ENCODE measurements at regions of chr6 and their contacts with region 1.

Region 1: DNA sequence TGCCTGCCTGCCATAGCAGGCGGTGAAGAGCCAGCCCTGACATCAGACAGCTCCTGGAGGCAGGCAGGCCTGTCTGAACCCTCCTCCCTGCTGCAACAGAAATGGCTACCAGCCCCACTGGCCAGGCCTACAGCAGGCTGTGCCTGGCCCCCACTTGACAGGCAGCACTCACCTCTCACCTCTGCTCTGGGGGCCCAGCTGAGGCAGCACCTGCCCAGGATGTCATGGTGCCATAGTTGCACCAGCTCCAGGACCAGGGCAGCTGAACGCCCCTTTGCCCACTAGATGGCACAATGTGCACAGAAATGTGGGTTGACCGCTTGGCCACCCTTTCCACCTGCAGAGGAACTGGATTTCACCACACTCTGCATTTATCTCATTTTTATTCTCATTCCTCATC is 30.6 kb downstream of the MRPL14 start:
- DNase-seq: peak; percentile 81
- ATAC-seq: peak; percentile 88

Region 2: DNA sequence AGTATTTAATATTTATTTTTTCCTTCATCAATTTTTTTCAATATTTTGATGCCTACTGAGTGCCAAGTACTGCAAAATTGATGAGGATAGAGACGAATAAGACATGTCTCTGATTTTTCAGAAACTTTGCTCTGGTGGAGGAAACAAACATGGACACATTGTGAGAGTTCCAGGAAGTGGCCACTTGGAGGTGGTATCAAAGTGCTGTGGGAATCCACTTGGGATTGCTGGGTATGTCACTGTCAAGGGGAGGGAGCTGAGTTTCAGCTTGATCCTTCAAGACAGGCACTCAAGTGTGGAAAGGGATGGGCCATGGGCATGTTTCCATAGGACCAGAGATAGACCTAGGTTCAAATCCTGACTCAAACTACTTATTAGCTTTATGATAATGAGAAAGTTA is 693.8 kb before region 1 on chr6:
- intact Hi-C with region 1: no loop called
- DNase-seq: no peak
- ATAC-seq: no peak

Region 3: GRCh38 chr6:44138717-44139350 is 42.2 kb after region 1 on chr6:
- intact Hi-C with region 1: no loop called
- DNase-seq: no peak
- ATAC-seq: no peak

Region 4: DNA sequence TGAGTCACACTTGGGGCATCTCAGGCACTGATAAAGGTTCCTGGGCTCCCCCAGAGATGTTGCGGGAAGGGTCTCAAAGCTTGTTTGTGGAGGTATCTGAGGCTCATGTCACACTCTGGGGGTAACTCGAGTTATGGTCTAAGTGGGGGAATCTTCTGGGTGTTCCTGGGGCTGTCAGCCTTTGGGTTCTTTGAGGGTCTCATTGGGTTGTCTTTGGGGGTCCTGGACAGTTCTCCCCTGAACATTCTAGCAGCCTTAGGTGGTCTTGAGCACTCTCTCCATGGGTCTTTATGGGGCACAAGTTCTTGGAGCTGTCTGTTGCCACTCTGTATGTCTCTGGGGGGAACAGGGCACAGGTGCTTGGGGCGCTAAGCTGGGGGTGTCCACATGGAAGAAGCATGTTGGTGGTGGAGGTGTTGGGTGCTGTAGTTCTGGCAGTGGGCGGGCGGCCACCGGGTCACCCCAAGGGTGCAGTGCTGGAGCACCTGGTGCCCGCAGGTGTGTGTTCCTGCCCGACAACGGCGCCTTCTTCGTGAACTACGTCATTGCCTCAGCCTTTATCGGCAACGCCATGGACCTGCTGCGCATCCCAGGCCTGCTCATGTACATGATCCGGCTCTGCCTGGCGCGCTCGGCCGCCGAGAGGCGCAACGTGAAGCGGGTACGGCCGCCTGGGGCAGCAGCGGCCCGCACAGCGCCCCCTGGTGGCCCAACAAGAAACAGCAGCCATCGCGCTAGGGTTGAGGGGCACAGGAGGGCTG is 54.9 kb after region 1 on chr6:
- intact Hi-C with region 1: loop called (anchors 2 kb)
- DNase-seq: peak; percentile 86
- ATAC-seq: peak; percentile 86

Region 5: DNA sequence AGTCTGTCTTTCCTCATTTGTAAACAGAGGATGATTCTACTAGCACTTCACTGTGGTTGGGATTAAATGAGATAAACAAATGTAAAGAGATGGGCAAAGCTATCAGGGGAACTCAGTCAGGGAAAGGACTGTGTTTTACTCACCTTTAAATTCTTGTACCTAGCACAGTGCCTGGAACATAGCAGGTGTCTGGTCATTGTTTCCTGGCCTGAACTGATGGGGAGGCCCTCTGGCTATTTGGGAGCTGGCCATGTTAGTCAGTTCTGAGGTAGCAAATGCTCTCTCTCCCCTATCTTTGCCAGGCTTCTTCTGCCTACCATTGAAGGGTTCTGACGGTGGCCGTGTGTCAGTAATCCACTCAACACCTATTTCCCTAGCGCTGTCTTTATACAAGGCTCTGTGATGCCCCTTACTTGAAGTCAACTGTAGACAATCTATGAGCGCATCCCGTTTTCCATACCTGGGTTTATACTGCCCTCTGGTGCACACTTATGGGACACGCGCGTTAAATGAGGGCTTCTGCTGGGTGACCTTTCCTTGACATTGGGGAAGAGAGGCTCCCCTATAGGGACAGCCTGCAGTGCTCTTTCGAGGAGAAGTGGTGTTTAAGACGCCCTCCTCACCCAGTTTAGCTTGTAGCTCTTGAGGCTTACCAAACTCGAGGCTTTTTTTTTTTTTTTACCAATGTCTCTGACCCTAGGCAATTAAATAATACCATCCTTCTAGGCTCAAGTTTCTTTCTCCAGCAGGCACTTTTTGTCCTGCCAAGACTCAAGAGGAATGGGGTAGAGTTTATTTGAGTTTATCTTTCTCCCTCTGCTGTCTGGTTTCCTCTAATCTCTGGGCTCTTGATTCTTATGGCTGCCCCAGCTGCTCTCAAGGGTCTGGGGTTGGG is 241.9 kb after region 1 on chr6:
- intact Hi-C with region 1: loop called (anchors 2 kb)
- DNase-seq: peak; percentile 55
- ATAC-seq: peak; percentile 82

Region 6: DNA sequence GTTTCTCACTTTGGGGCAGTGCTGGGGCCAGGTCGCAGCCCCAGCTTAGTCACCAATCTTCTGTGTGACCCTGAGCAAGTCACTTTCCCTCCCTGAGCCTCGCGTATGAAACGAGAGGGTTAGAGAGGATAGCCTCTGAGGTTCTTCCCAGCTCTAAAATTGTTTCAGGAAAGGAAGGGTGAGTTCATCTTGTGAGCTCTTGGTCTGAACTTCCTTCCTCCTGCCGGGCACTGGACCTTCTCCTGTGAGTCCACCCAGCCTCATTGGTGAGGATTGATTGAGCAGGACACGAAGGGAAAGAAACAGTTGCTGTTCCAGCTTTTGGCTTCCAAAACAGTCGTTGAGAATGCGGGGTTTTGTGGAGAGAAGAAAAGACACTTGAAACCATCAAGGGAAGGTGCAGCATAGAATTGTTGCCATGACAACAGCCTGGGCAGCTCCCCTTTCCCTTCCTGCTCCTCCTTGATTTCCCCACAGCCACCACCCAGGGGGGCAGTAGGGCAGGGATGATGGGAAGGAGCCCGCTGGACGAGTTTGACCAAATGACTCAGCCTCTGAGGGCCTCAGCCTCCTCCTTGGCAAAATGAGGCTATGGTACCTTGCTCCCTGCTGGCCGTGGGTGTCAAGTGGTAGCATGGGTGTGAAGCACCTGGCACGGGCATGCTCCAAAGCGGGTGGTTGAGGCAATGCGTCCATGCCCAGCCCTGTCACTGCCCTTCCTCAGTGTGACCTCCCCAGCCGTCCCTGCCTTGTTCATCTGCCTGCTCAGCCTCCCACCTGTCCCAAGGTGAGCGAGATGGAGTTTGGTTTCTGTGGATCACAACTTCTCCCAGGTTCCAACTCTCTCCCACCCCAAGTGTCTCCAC is 398.7 kb after region 1 on chr6:
- intact Hi-C with region 1: no loop called
- DNase-seq: no peak
- ATAC-seq: no peak

Measured in Right ventricle myocardium superior (tissue), 1 donor.